ENCODE measurements at regions of chr6 and their contacts with region 1.

Region 1: DNA sequence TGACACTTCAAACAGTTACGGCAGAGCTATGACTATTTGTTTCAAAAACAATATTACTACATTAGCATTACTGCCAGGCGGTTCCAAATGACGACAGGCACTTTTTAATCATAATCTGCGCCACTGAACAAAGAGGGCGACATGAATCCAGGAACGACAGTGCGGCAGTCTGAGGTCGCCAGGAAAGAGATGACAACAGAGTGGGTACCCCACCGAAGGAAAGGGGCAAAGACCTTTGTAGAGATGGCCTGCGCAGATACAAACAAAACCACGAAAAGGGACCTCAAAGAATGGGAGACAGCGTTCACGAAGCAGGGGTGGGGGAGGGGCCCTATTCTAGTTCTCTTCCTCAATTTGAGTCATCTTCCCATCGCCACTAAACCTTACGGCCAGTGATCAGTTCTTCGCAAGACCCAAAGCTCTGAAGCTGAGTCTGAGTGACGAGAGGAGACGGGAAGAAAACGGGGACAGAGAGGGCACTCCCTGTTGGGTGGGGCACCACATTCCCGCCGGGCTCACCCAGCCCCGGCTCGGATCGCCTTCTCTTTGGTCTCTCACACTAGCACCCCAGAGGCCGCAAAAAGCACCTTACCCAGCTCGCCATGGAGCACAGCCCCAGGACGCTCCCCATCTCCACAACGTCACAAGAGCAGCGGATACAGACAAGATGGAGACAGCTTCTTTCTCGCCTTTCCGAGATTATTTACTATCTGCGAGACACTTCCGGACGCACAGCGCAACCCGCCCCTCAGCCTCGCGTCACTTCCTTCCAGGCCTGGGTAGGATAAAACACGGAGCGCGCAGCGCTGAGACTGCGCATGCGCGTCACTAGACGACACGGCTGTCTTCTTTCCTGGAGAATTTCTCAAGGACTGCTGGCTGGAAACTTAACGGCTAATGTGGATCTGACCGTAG is at the start of gene SERINC1:
- DNase-seq: peak; percentile 95
- H3K4me3 Mint-ChIP-seq: peak within 1 kb of the TSS; percentile 100
- H3K27ac Mint-ChIP-seq: peak within 1 kb of the TSS; percentile 100
- H3K4me1 Mint-ChIP-seq: peaks cover 39% of the 10 kb centered on the region
- H3K27me3 Mint-ChIP-seq: no peaks in the 10 kb centered on the region
- total RNA-seq, gene SERINC1: 48.2 to 51.1 TPM

Region 2: GRCh38 chr6:121334299-121335086 is 1136.9 kb before region 1 on chr6 and contains the start of gene TBC1D32:
- CTCF ChIA-PET with region 1: no interaction called
- POLR2A ChIA-PET with region 1: no interaction called
- intact Hi-C with region 1: loop called (anchors 1 kb)
- DNase-seq: peak; percentile 92
- H3K4me3 Mint-ChIP-seq: peak within 1 kb of the TSS; percentile 92
- H3K27ac Mint-ChIP-seq: peak within 1 kb of the TSS; percentile 95
- H3K4me1 Mint-ChIP-seq: peaks cover 19% of the 10 kb centered on the region
- H3K27me3 Mint-ChIP-seq: no peaks in the 10 kb centered on the region
- total RNA-seq, gene TBC1D32: 4.6 to 6.7 TPM

Region 3: GRCh38 chr6:122393351-122393896 is 77.9 kb before region 1 on chr6:
- CTCF ChIA-PET with region 1: no interaction called
- POLR2A ChIA-PET with region 1: interaction called, 8 read pairs
- intact Hi-C with region 1: loop called (anchors 1 kb)
- DNase-seq: peak; percentile 28
- H3K4me3 Mint-ChIP-seq: no peak overlapping the region
- H3K27ac Mint-ChIP-seq: peak overlapping the region; percentile 64
- H3K4me1 Mint-ChIP-seq: peaks cover 15% of the 10 kb centered on the region
- H3K27me3 Mint-ChIP-seq: peaks cover 3% of the 10 kb centered on the region

Region 4: DNA sequence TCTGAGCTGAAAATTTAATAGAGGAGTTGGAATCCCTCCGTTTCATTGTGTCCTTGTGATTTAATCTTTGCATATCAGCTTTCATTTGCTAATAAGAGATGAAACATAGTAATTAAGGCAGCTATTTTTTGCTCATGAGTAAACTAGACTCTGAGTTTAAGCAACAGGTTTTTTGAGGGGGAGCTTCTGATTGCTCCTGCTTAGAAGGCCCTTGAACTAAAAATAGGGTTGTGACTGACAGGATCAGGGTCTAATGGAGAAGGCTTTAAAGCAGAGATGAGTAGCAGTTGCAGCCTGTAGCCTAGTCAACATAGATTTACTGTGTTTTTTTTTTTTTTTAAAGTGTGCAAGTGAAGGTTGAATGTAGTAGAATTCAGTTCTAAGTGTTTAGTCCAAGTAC is 54.5 kb before region 1 on chr6:
- CTCF ChIA-PET with region 1: no interaction called
- POLR2A ChIA-PET with region 1: no interaction called
- intact Hi-C with region 1: no loop called
- DNase-seq: no peak
- H3K4me3 Mint-ChIP-seq: no peak overlapping the region
- H3K27ac Mint-ChIP-seq: no peak overlapping the region
- H3K4me1 Mint-ChIP-seq: no peaks in the 10 kb centered on the region
- H3K27me3 Mint-ChIP-seq: no peaks in the 10 kb centered on the region

Region 5: DNA sequence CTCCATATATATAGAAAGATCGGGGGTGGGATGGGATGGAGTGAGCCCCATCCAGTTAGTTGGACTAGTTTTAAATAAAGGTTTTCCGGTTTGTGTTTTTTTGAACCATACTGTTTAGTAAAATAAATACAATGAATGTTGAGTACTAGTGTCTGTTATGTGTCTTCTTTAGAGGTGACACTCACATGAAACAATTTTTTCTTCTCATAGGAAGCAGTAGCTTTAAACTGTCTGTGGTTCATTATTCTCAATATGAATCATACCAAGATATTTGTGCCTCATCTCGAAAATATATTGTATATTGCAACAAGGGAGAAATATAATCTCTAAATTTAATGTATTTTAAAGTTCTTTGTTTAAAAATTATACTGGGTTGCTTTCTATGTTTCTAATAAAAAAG is 38.5 kb before region 1 on chr6:
- CTCF ChIA-PET with region 1: no interaction called
- POLR2A ChIA-PET with region 1: no interaction called
- intact Hi-C with region 1: loop called (anchors 2 kb)
- DNase-seq: no peak
- H3K4me3 Mint-ChIP-seq: no peak overlapping the region
- H3K27ac Mint-ChIP-seq: no peak overlapping the region
- H3K4me1 Mint-ChIP-seq: peaks cover 16% of the 10 kb centered on the region
- H3K27me3 Mint-ChIP-seq: no peaks in the 10 kb centered on the region

Region 6: GRCh38 chr6:122609856-122610689 is 138.7 kb after region 1 on chr6 and contains the start of gene PKIB:
- CTCF ChIA-PET with region 1: no interaction called
- POLR2A ChIA-PET with region 1: no interaction called
- intact Hi-C with region 1: loop called (anchors 10 kb)
- DNase-seq: peak; percentile 61
- H3K4me3 Mint-ChIP-seq: peak within 1 kb of the TSS; percentile 70
- H3K27ac Mint-ChIP-seq: no peak within 1 kb of the TSS
- H3K4me1 Mint-ChIP-seq: peaks cover 10% of the 10 kb centered on the region
- H3K27me3 Mint-ChIP-seq: peaks cover 26% of the 10 kb centered on the region
- total RNA-seq, gene PKIB: 0.48 to 0.52 TPM

Region 7: DNA sequence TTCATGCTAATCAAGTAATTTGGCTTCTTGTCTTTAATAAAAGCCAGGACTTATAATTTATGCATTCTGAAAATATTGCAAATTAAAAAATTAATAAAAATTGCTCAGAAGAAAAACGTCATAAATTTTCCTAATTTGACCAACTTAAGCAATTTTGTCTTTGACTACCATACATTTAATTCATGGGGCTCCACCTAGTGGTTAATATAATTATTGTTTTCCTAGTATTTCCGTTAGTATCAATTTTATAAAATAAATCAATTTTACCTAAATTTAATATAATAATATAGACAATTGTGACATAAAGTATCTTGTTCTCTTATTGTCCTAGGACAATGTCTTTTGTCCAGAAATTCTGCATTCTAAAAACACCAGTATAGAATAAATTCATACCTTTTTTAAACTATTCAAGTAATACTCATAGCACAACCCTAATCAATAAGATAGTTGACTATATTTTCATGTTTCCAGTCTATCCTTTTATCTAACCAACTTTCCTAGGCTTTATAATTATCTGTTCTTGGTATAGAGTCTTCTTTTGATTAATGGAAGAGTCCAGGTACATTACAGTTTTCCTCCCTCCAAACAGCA is 845.5 kb after region 1 on chr6:
- CTCF ChIA-PET with region 1: no interaction called
- POLR2A ChIA-PET with region 1: no interaction called
- intact Hi-C with region 1: loop called (anchors 10 kb)
- DNase-seq: no peak
- H3K4me3 Mint-ChIP-seq: no peak overlapping the region
- H3K27ac Mint-ChIP-seq: no peak overlapping the region
- H3K4me1 Mint-ChIP-seq: no peaks in the 10 kb centered on the region
- H3K27me3 Mint-ChIP-seq: no peaks in the 10 kb centered on the region

Region 8: GRCh38 chr6:124131259-124131658 is 1659.9 kb after region 1 on chr6:
- CTCF ChIA-PET with region 1: no interaction called
- POLR2A ChIA-PET with region 1: no interaction called
- intact Hi-C with region 1: no loop called
- DNase-seq: no peak
- H3K4me3 Mint-ChIP-seq: no peak overlapping the region
- H3K27ac Mint-ChIP-seq: no peak overlapping the region
- H3K4me1 Mint-ChIP-seq: no peaks in the 10 kb centered on the region
- H3K27me3 Mint-ChIP-seq: no peaks in the 10 kb centered on the region